Lower leg skin (tissue), 4 donors: ENCODE measurements at regions of chr19 and their contacts with region 1.

Region 1: GRCh38 chr19:46661020-46661731 is at the start of gene DACT3:
- DNase-seq: peak; percentile 100
- H3K4me3 ChIP-seq: peak within 1 kb of the TSS; percentile 21
- CTCF ChIP-seq: no peak
- POLR2A ChIP-seq: no peak
- total RNA-seq, gene DACT3: 1.3 to 4.1 (median 2.6) TPM

Region 2: DNA sequence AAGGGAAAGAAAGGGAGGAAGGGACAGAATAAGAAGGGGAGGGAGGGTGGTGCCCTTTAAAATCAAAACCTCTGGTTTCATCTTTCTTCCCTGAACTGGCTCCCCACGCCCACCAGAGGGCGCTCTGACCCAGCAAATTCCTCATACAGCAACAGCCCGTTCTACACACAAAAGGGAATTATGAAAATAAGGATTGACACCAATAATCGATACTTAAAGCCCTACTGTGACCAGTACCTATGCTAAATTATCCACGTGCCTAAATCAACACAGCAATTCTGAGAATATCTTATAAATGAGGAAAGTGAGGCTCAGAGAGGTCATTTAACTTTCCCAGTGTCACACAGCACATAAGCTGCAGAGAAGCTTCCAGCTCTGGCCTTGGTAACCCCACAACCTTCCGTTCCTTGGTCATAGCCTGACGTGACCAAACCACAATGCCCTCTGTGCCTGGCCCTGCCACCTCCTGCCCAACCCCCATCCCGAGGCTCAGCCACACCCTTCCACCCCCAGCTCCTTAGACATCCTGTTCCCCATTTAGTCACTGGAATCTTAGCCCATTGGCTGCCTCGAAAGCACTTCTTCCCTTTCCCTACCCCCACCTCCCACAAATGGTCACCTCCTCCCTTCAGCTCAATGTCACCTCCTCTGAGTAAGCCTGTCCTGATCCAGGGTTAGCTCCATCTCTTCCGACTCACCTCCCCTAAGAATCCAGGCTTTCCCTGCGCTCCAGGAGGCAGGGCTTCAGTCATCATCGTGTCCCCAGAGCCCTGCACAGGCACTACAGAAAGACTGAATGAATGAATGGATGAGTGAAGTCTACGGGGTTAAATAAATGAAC is 131.3 kb before region 1 on chr19:
- intact Hi-C with region 1: loop called (anchors 10 kb)
- DNase-seq: peak in 1 of 2 donors; percentile 68
- H3K4me3 ChIP-seq: no peak overlapping the region
- CTCF ChIP-seq: peak in 1 of 3 donors; percentile 68
- POLR2A ChIP-seq: no peak

Region 3: DNA sequence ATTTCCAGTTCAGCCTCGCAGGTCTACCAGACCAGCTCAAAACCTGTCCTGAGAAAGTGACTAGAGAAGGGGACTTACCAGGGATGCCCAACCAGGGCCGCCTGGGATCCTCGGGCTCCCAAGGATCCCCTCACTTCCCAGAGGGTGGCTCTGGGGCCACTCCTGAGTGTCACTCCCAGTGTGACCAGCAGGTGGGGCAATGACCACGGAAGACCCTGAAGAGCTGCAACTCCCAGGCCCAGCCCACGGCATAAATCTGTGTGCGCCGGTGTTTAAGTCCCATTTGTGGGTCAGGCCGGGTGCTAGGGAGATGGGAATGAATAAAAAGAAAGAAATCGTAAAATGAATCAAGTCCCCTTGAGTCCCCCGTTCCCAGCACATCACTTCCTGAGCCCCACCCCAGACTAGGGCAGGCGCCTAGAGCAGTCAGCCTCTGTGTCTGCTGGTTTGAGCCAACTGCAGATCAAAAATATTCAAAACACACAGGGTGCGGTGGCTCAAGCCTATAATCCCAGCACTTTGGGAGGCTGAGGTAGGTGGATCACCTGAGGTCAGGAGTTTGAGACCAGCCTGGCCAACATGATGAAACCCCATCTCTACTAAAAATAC is 47.0 kb before region 1 on chr19:
- intact Hi-C with region 1: loop called (anchors 10 kb)
- DNase-seq: peak; percentile 73 to 96
- H3K4me3 ChIP-seq: no peak overlapping the region
- CTCF ChIP-seq: peak in 2 of 3 donors; percentile 11 to 81
- POLR2A ChIP-seq: no peak

Region 4: DNA sequence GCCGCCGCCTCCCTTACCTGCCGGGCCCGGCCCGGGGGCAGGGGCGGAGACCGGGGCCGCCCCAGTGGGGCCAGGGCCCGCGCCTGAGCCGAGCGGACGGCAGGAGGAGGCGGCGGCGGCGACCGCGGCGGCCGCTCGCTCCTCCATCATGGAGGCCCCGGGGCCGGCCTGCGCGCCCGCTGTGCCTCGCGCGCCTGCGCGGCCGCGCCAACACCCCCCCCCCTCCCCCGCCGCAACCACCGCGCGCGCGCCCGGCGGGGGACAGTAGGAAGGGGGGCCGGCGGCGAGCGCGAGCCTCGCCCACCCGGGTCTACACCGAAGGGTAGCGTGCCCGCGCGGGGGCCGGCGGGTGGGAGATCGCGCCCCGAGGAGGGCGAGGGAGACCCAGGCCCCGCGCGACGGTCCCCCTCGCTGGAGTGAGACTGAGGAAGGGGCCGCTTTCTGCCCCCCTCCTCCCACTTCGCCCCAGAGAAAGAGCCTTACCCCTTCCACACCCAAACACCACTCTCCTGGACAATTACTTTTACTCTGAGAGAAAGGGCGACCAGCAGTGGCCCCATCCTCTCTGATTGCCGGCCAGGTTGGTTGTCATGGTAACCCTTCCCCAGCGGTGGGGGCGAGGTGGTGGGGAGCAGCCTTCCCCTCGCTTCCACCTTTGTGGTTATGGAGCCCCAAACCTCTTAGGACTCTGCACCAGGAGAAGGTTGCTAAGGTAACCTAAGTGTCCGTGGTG is 85.3 kb after region 1 on chr19 and contains the start of gene STRN4:
- intact Hi-C with region 1: no loop called
- DNase-seq: no peak
- H3K4me3 ChIP-seq: peak within 1 kb of the TSS; percentile 85
- CTCF ChIP-seq: no peak
- POLR2A ChIP-seq: no peak
- total RNA-seq, gene STRN4: 81.5 to 97.6 (median 93.5) TPM